PC-9 (cell line): ENCODE measurements at regions of chr2 and their contacts with region 1.

Region 1: GRCh38 chr2:240893363-240893844 is 2.6 kb downstream of the MAB21L4 start:
- DNase-seq: peak; percentile 100
- H3K4me3 ChIP-seq: peak overlapping the region; percentile 77
- H3K27ac ChIP-seq: peak overlapping the region; percentile 83
- H3K4me1 ChIP-seq: peaks cover 86% of the 10 kb centered on the region
- H3K27me3 ChIP-seq: no peaks in the 10 kb centered on the region
- CTCF ChIP-seq: peak; percentile 55; the same call in 1 of the 2 replicates

Region 2: DNA sequence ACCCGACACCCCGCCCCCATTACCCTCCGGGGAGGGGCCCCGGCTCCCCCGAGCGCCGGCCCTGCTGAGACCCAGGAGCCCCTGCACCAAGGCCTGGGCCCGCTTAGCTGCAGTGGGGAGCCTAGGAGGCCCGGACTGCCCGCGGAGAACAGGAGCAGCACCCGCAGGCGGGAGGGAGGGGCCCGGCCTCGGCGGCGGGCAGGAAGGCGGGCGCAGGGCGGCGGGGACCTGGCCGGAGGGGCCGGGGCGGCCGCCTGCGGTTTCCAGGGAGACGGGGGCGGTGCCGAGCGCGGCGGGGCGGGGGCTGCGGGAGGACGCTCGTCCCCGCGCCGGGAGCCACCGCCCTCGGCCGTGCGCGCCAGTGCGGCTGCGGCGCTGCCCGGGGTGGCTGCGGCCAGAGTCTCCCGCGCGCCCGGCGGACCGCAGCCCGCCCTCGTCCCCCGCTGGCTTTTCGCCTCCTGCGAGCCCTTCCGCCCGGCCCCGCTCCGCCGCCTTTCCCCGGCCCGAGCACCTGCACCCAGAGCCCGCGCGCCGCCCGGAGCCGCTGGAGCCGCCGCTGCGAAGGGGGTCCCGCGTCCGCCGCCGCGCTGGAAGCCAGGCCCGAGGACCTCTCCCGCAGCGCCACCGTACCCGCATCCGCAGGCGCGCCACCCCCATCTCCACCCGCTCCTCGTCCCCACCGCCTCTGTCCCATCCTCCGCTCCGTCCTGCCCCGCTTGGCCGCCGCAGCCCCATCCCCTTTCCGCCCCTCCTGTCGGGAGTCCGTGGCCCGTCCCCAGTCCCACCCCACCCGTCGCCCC is 440.7 kb before region 1 on chr2:
- CTCF ChIA-PET with region 1: no interaction called
- POLR2A ChIA-PET with region 1: no interaction called
- intact Hi-C with region 1: loop called (anchors 2 kb)
- DNase-seq: peak; percentile 58 to 97
- H3K4me3 ChIP-seq: peak overlapping the region; percentile 60; the same call in 1 of the 2 replicates
- H3K27ac ChIP-seq: no peak overlapping the region
- H3K4me1 ChIP-seq: peaks cover 44% of the 10 kb centered on the region
- H3K27me3 ChIP-seq: no peaks in the 10 kb centered on the region
- CTCF ChIP-seq: no peak

Region 3: DNA sequence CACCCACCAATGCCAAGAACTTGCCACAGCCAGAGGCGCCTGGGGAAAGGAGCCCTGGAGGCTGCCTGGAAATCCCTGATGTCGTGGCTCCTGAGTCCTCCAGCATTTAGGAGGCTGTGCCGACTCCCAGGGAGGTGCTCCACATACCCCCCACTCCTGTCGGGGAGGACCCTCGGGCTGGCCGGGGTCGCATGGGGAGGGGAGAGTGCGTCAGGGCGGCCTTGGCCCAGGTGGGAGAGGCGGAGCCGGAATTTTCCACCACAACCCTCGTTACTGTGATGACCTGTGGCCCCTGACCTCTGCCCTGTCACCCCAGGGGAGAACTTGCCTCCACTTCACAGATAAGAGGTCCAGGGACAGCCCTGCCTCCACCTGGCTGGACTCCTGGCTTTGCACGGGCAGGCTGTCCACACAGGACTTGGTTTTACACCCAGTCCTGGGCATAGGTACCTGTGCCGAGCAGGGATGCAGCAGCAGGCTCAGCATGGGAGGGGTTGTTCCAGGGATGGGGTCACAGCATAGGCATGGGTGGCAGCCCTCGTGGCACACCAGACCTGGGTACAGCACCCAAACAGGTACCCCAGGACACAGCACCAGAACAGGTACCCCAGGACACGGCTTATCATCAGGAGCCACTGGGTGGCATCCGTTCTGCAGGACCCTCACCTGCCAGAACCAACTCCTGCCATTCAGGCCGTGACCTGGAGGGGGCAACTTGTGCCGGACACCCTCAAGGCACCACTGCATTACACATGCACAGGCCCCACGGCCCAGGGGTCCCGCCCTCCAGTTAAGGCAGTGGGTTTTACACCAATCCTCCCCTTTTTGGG is 37.0 kb before region 1 on chr2:
- CTCF ChIA-PET with region 1: no interaction called
- POLR2A ChIA-PET with region 1: interaction called, 4 read pairs
- intact Hi-C with region 1: loop called (anchors 5 kb)
- DNase-seq: peak in 1 of 2 experiments; percentile 71
- H3K4me3 ChIP-seq: no peak overlapping the region
- H3K27ac ChIP-seq: no peak overlapping the region
- H3K4me1 ChIP-seq: 0 out of 2 replicates have a peak, but pooled peaks cover 7% of the 10 kb centered on the region
- H3K27me3 ChIP-seq: no peaks in the 10 kb centered on the region
- CTCF ChIP-seq: peak; percentile 59; the same call in 1 of the 2 replicates

Region 4: DNA sequence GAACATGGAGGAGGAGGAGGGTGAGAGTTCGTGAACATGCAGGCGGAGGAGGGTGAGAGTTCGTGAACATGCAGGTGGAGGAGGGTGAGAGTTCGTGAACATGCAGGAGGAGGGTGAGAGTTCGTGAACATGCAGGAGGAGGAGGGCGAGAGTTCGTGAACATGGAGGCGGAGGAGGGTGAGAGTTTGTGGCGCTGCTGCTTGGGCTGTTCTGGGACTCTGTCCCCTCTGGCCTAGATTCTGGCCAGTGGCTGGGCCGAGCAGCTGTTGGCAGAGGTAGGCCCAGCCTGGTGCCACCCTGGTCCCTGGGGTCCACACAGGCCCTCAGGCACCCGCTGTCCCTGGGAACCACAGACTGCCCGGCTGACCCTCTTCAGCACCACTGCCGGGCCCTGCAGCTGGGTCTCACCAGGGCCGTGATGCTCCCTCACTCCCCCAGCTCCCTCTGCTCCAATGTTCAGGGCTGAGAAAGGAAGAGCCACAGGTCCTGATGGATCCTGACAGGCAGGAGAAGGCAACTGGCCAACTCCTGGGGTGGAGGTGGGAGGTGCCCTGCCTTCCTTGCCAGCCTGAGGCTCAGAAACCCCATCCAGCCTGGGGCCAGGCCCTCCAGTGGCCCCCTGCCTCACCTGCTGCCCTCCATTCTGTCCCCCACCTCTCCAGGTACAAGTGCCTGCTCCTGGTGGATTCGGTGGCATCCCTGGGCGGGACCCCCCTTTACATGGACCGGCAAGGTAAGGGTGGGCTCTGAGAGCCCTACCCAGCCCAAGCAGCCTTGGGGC is 20.9 kb before region 1 on chr2:
- CTCF ChIA-PET with region 1: no interaction called
- POLR2A ChIA-PET with region 1: no interaction called
- intact Hi-C with region 1: no loop called
- DNase-seq: no peak
- H3K4me3 ChIP-seq: no peak overlapping the region
- H3K27ac ChIP-seq: no peak overlapping the region
- H3K4me1 ChIP-seq: peaks cover 14% of the 10 kb centered on the region
- H3K27me3 ChIP-seq: no peaks in the 10 kb centered on the region
- CTCF ChIP-seq: no peak

Region 5: DNA sequence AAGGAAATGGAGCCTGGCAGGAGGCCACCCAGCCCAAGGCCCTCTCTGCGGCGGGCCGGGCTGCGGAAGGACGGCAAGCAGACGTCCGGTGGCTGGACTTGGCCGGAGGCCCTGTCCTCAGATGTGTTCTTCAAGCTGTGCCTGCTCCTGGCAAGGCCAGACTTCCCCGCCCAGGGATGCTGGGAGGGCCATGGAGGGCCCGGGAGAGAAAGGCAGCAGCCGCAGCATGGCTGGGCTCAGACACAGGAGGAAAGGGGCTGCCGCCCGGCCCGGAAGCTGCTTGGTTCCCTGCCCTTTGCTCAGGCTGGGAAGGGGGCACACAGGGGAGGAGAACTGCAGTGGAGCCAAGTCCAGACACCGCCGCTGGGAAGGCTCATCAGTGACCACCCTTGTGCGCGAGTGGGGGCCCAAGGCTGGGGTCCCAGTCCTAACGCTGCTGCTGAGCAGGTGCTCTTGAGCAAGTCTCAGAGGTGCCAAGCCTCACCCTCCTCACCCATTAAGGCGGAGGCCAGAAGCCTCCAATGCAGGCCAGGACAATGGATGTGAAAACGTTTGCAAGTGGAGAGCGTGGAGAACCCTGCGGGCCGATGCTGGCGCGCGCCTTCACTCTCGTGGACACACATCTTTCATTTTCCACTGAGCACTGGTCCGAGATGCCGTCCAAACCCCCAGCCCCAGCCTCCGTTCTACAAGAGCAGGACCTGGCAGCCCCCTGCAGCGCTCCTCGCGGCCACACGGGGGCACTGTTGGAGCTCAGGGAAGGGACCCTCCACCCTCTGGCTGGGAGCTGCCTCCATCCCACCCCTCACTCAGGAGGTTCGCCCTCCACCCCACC is 20.6 kb after region 1 on chr2:
- CTCF ChIA-PET with region 1: interaction called, 11 read pairs
- POLR2A ChIA-PET with region 1: interaction called, 3 read pairs
- intact Hi-C with region 1: loop called (anchors 2 kb)
- DNase-seq: peak in 1 of 2 experiments; percentile 65
- H3K4me3 ChIP-seq: no peak overlapping the region
- H3K27ac ChIP-seq: no peak overlapping the region
- H3K4me1 ChIP-seq: peaks cover 17% of the 10 kb centered on the region
- H3K27me3 ChIP-seq: no peaks in the 10 kb centered on the region
- CTCF ChIP-seq: peak; percentile 99

Region 6: GRCh38 chr2:241149925-241150659 is 256.7 kb after region 1 on chr2 and contains the start of gene PPP1R7:
- CTCF ChIA-PET with region 1: no interaction called
- POLR2A ChIA-PET with region 1: interaction called, 4 read pairs
- intact Hi-C with region 1: loop called (anchors 5 kb)
- DNase-seq: peak; percentile 94 to 97
- H3K4me3 ChIP-seq: peak within 1 kb of the TSS; percentile 76
- H3K27ac ChIP-seq: no peak within 1 kb of the TSS
- H3K4me1 ChIP-seq: peaks cover 17% of the 10 kb centered on the region
- H3K27me3 ChIP-seq: no peaks in the 10 kb centered on the region
- CTCF ChIP-seq: no peak
- total RNA-seq, gene PPP1R7: 113 and 143 TPM in 2 replicates

Region 7: GRCh38 chr2:241324775-241325174 is 431.4 kb after region 1 on chr2:
- CTCF ChIA-PET with region 1: no interaction called
- POLR2A ChIA-PET with region 1: no interaction called
- intact Hi-C with region 1: no loop called
- DNase-seq: no peak
- H3K4me3 ChIP-seq: no peak overlapping the region
- H3K27ac ChIP-seq: no peak overlapping the region
- H3K4me1 ChIP-seq: 0 out of 2 replicates have a peak, but pooled peaks cover 4% of the 10 kb centered on the region
- H3K27me3 ChIP-seq: no peaks in the 10 kb centered on the region
- CTCF ChIP-seq: no peak

Region 8: GRCh38 chr2:241354668-241355658 is 461.6 kb after region 1 on chr2:
- CTCF ChIA-PET with region 1: no interaction called
- POLR2A ChIA-PET with region 1: no interaction called
- intact Hi-C with region 1: no loop called
- DNase-seq: peak; percentile 76 to 98
- H3K4me3 ChIP-seq: peak overlapping the region; percentile 51
- H3K27ac ChIP-seq: peak overlapping the region; percentile 53
- H3K4me1 ChIP-seq: peaks cover 44% of the 10 kb centered on the region
- H3K27me3 ChIP-seq: no peaks in the 10 kb centered on the region
- CTCF ChIP-seq: peak; percentile 52; the same call in 1 of the 2 replicates